ENCODE measurements at regions of chr12 and their contacts with region 1.

Region 1: DNA sequence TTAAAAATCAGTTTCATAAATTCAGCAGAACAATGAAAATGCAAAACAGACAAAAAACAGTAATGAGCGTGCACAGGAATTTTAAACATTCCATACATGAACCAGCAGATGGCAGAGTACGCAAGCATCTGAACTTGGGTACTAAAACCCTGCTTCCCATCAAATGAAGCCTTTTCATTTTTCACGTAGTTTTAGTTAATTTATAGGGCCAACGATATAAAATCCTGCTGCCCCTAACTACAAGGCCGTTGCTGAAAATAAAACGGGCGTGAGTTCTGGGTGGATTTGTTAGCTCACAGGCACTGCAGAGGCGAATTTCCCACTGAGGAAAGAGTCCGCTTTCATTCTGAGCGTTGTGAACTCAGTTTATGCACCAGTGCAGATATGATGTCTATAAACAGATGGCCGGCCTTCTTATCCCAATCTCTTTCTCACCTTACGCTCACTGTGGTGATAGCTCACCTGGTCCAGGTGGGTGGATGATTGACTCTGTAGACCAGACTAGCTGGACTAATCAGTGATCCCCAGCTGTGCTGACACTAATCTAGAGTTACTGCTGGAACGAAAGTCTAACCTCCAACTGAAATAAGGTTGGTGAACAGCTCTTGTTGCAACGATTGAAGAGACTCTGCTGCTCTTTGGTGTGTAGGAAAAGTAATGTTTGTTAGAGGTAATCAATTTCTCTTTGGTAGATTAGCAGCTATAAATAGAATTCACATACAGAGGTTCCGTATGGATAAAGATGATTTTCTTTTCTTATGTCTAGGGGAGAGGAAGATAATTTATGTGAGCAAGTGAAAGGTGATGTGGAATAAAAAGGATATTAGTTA is 89.2 kb downstream of the PDZRN4 start:
- DNase-seq: peak; percentile 19
- ATAC-seq: peak; percentile 55
- H3K4me3 ChIP-seq: no peak overlapping the region
- H3K27ac ChIP-seq: no peak overlapping the region
- H3K4me1 ChIP-seq: no peaks in the 10 kb centered on the region
- H3K27me3 ChIP-seq: no peaks in the 10 kb centered on the region
- CTCF ChIP-seq: peak; percentile 54 to 72 (median 57); a peak in 5 of 6 replicates
- POLR2A ChIP-seq: no peak
- RAD21 ChIP-seq: peak; percentile 86

Region 2: GRCh38 chr12:41254004-41254914 is 23.1 kb before region 1 on chr12:
- CTCF ChIA-PET with region 1: no interaction called
- POLR2A ChIA-PET with region 1: no interaction called
- RAD21 ChIA-PET with region 1: no interaction called
- intact Hi-C with region 1: no loop called
- DNase-seq: no peak
- ATAC-seq: no peak
- H3K4me3 ChIP-seq: no peak overlapping the region
- H3K27ac ChIP-seq: no peak overlapping the region
- H3K4me1 ChIP-seq: no peaks in the 10 kb centered on the region
- H3K27me3 ChIP-seq: no peaks in the 10 kb centered on the region
- CTCF ChIP-seq: no peak
- POLR2A ChIP-seq: no peak
- RAD21 ChIP-seq: no peak

Region 3: DNA sequence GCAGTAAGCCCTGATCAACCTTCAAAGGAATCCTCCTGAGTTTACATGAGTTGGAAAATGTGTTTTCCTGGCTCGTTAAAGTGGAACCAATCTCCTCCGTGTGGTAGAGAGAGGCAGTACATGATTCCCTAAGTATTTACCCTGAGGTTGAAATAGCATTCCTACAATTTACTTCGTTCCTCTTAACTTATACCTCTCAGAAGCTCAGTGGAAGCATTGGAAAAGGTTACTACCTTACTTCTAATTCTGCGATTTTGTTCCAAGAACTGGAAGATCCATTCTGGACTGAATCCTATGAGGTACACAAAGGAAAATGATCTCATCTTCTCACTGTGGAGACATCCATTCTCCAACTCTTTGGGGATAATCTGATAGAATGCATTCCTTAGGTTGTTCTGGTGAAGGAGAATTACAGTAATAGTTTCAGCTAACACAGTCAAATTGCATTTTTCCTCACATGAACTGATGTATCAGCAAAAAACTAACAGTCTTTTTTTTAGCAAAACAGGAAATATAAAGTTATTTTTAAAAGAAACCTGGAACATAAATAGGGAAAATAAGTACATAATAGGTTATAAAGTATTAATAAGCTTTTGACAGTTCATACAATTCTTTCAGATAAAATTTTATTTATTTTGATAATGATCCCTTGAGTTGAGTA is 386.4 kb after region 1 on chr12:
- CTCF ChIA-PET with region 1: interaction called, 6 read pairs
- POLR2A ChIA-PET with region 1: no interaction called
- RAD21 ChIA-PET with region 1: no interaction called
- intact Hi-C with region 1: loop called (anchors 1 kb)
- DNase-seq: peak; percentile 16
- ATAC-seq: peak; percentile 82
- H3K4me3 ChIP-seq: no peak overlapping the region
- H3K27ac ChIP-seq: no peak overlapping the region
- H3K4me1 ChIP-seq: no peaks in the 10 kb centered on the region
- H3K27me3 ChIP-seq: no peaks in the 10 kb centered on the region
- CTCF ChIP-seq: peak; percentile 27 to 54 (median 52); a peak in 5 of 6 replicates
- POLR2A ChIP-seq: no peak
- RAD21 ChIP-seq: peak; percentile 58

Region 4: DNA sequence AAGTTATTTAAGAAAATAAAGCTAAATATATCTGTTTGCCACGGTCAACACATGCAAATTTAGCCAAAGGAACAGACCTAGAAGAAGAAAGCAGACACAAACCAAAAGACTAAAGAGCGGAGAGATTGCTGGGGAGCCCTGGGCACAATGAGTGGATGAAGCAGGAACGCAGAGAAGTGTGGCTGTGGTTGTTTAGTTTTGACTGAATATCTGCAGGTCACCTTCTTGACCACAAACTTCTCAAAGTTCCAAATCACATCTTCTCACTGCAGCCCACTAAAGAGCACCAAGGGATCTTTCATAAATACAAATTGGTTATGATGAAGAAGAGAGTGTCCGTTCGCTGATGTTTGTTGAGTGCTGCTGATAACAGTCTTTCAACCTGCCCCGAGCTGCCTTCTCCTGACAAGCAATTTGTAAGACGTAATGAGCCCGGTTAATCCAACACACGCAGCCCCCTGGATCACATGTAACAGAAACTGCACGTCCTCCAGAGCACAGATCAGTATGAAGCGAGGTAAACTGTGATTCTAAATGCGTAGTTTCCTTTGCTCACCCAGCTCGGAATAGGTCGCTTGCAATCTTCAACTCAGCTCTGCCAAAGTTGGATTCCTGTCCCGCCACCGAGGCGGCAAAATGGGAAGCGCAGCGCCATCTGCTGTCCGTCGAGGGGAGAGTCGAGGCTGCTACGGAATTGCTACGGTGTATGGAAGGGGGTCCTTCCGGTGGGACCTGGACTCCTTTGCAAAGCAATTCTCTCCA is 746.6 kb after region 1 on chr12:
- CTCF ChIA-PET with region 1: interaction called, 23 read pairs
- POLR2A ChIA-PET with region 1: no interaction called
- RAD21 ChIA-PET with region 1: interaction called in 1 of 2 experiments, 3 read pairs
- intact Hi-C with region 1: loop called (anchors 1 kb)
- DNase-seq: peak; percentile 44
- ATAC-seq: peak; percentile 97
- H3K4me3 ChIP-seq: peak overlapping the region; percentile 6 to 9; a peak in 1 of 4 replicates
- H3K27ac ChIP-seq: no peak overlapping the region
- H3K4me1 ChIP-seq: peaks cover 0 to 3% of the 10 kb centered on the region in 2 experiments; a peak in 1 of 4 replicates
- H3K27me3 ChIP-seq: no peaks in the 10 kb centered on the region
- CTCF ChIP-seq: peak; percentile 67 to 97 (median 94); a peak in 5 of 6 replicates
- POLR2A ChIP-seq: no peak
- RAD21 ChIP-seq: peak; percentile 88

Region 5: GRCh38 chr12:42332301-42333285 is 1055.3 kb after region 1 on chr12:
- CTCF ChIA-PET with region 1: no interaction called
- POLR2A ChIA-PET with region 1: no interaction called
- RAD21 ChIA-PET with region 1: no interaction called
- intact Hi-C with region 1: loop called (anchors 10 kb)
- DNase-seq: peak; percentile 29
- ATAC-seq: peak; percentile 73
- H3K4me3 ChIP-seq: no peak overlapping the region
- H3K27ac ChIP-seq: no peak overlapping the region
- H3K4me1 ChIP-seq: peaks cover 0 to 1% of the 10 kb centered on the region in 2 experiments; a peak in 2 of 4 replicates
- H3K27me3 ChIP-seq: no peaks in the 10 kb centered on the region
- CTCF ChIP-seq: peak; percentile 43 to 63 (median 63); a peak in 5 of 6 replicates
- POLR2A ChIP-seq: no peak
- RAD21 ChIP-seq: peak; percentile 71

Region 6: DNA sequence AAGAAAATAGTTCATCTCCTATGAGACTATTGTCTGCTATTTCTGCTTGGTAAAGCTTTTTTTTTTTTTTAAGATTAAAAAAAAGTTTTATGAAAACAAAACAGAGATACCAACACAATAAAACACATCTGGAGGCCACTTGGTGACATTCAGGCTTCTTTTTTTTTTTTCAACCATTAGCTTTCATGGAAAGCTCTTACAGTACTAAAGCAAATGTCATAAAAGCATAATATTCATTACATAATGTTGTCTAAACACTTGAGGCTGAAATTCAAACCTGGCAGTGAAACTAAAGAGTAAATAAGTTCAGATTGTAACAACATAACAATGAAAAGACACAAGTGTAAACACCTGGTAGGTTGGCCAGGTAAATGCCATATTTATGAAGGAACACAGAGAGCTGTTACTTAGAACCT is 1297.5 kb after region 1 on chr12:
- CTCF ChIA-PET with region 1: no interaction called
- POLR2A ChIA-PET with region 1: no interaction called
- RAD21 ChIA-PET with region 1: no interaction called
- intact Hi-C with region 1: loop called (anchors 10 kb)
- DNase-seq: no peak
- ATAC-seq: no peak
- H3K4me3 ChIP-seq: no peak overlapping the region
- H3K27ac ChIP-seq: no peak overlapping the region
- H3K4me1 ChIP-seq: no peaks in the 10 kb centered on the region
- H3K27me3 ChIP-seq: no peaks in the 10 kb centered on the region
- CTCF ChIP-seq: no peak
- POLR2A ChIP-seq: no peak
- RAD21 ChIP-seq: no peak

Measured in HCT116 (cell line).